ENCODE measurements at regions of chr17 and their contacts with region 1.

Region 1: DNA sequence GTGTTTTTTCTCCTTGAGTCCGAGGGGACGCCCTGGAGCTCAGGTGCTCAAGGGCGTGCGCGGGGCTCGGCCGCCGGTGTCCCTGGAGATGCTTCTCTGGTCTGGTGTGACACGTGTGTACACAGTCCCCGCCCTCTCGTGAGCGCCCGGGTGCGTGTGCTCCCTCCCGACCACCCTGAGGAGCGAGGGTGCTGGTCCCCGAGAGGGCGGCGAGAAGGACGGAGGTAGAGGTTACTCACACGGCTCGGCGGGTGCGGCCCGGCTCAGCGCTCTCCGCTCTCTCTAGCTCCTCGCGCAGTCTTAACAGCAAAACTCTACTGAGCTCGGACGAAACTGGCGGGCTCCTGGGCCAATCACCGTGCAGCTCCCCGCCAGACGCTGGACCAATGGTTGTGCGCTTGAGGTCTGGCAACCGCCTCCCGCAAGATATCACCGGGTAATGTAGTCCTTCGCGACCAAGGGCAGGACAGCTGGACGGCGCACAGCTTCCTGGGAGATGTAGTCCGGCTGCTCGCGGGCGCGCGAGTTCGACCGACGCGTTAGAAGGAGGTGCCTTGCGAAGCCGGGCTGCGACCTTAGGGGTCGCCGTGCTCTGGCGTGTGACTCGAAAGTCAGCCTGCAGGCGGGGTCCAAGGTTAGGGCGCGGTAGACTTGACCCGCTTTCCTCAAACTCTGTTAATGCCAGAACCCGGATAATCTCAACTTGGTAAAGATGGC is at the start of gene SLC25A19:
- DNase-seq: peak; percentile 80 to 98 (median 95)
- ATAC-seq: peak; percentile 96
- H3K4me3 ChIP-seq: peak within 1 kb of the TSS; percentile 84
- H3K4me3 Mint-ChIP-seq: peak within 1 kb of the TSS; percentile 96 to 100 (median 100)
- H3K27ac ChIP-seq: peak within 1 kb of the TSS; percentile 90
- H3K27ac Mint-ChIP-seq: peak within 1 kb of the TSS; percentile 99 to 100 (median 100)
- H3K4me1 ChIP-seq: peaks cover 0 to 6% of the 10 kb centered on the region in 2 donors
- H3K4me1 Mint-ChIP-seq: peaks cover 6 to 28% (median 15%) of the 10 kb centered on the region in 7 donors
- H3K27me3 ChIP-seq: no peaks in the 10 kb centered on the region
- H3K27me3 Mint-ChIP-seq: peaks cover 0 to 2% (median 0%) of the 10 kb centered on the region in 5 donors
- total RNA-seq, gene SLC25A19: 15.6 to 42.5 (median 21.1) TPM

Region 2: GRCh38 chr17:74873038-74873873 is 416.0 kb before region 1 on chr17:
- CTCF ChIA-PET with region 1: no interaction called
- POLR2A ChIA-PET with region 1: no interaction called
- intact Hi-C with region 1: loop called in 1 of 2 experiments (anchors 1 kb)
- DNase-seq: peak; percentile 91 to 100 (median 98)
- ATAC-seq: peak; percentile 97
- H3K4me3 ChIP-seq: peak overlapping the region; percentile 87
- H3K4me3 Mint-ChIP-seq: peak overlapping the region; percentile 74 to 96 (median 88)
- H3K27ac ChIP-seq: peak overlapping the region; percentile 91
- H3K27ac Mint-ChIP-seq: peak overlapping the region; percentile 94 to 99 (median 97)
- H3K4me1 ChIP-seq: peaks cover 11 to 14% of the 10 kb centered on the region in 2 donors
- H3K4me1 Mint-ChIP-seq: peaks cover 18 to 41% (median 22%) of the 10 kb centered on the region in 7 donors
- H3K27me3 ChIP-seq: no peaks in the 10 kb centered on the region
- H3K27me3 Mint-ChIP-seq: peaks cover 0 to 3% (median 0%) of the 10 kb centered on the region in 5 donors

Region 3: GRCh38 chr17:75261336-75262111 is 27.7 kb before region 1 on chr17 and contains the starts of genes GGA3 and MRPS7:
- CTCF ChIA-PET with region 1: interaction called, 6 read pairs
- POLR2A ChIA-PET with region 1: interaction called, 47 read pairs
- intact Hi-C with region 1: loop called (anchors 1 kb)
- DNase-seq: peak; percentile 94 to 98 (median 96)
- ATAC-seq: peak; percentile 97
- H3K4me3 ChIP-seq: peak within 1 kb of the TSS; percentile 98
- H3K4me3 Mint-ChIP-seq: peak within 1 kb of the TSS; percentile 94 to 100 (median 97)
- H3K27ac ChIP-seq: peak within 1 kb of the TSS; percentile 99
- H3K27ac Mint-ChIP-seq: peak within 1 kb of the TSS; percentile 100
- H3K4me1 ChIP-seq: peaks cover 23% of the 10 kb centered on the region in 2 donors
- H3K4me1 Mint-ChIP-seq: peaks cover 40 to 65% (median 62%) of the 10 kb centered on the region in 7 donors
- H3K27me3 ChIP-seq: no peaks in the 10 kb centered on the region
- H3K27me3 Mint-ChIP-seq: no peaks in the 10 kb centered on the region
- total RNA-seq, gene GGA3: 79.6 to 128 (median 87.4) TPM
- total RNA-seq, gene MRPS7: 29.2 to 70.1 (median 34.4) TPM

Region 4: DNA sequence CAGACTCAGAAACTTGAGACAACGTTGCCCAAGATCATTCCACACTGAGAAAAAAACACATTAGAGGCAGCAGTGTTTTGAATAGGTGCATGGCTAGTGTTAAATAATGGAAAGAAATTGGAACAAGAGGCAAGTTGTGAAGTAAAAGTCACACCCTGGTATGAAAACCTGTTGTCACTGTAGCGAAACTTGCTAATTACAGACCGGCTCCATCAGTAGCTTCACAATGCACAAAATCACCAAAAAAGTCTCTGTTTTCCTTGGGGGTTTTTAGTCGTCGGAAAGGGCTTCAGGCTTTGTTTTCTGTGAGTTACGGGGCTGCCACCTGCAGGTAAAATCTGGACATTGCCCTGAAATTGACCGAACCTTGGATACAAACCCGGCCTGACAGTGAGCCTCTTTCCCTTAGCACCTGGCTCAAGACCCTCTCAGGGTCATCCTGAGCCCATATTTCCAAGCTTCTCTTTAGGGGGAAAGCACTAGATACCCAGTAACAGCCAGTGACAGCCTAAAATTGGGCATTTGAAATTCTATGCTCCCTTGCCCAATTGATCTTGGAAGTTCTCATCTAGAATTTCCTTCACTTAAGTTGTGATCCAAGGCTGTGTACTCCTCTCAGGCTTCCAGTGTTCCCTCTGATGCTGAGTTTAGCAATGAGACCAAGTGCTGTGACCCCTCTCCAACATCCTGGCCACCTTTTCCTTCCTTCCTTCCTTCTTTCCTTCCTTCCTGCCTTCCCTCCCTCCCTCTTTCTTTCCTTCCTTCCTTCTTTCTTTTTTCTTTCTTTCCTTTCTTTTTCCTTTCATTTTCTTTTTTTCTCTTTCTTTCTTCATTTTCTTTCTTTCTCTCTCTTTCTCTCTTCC is 123.4 kb after region 1 on chr17:
- CTCF ChIA-PET with region 1: interaction called, 19 read pairs
- POLR2A ChIA-PET with region 1: interaction called, 32 read pairs
- intact Hi-C with region 1: loop called (anchors 1 kb)
- DNase-seq: peak; percentile 52 to 82 (median 73)
- ATAC-seq: peak; percentile 88
- H3K4me3 ChIP-seq: peak overlapping the region; percentile 25
- H3K4me3 Mint-ChIP-seq: peak overlapping the region; percentile 23 to 75 (median 60)
- H3K27ac ChIP-seq: peak overlapping the region; percentile 19
- H3K27ac Mint-ChIP-seq: peak overlapping the region in 6 of 9 donors; percentile 15 to 87 (median 45)
- H3K4me1 ChIP-seq: peaks cover 3 to 13% of the 10 kb centered on the region in 2 donors
- H3K4me1 Mint-ChIP-seq: peaks cover 14 to 26% (median 23%) of the 10 kb centered on the region in 7 donors
- H3K27me3 ChIP-seq: no peaks in the 10 kb centered on the region
- H3K27me3 Mint-ChIP-seq: peaks cover 0 to 27% (median 0%) of the 10 kb centered on the region in 5 donors

Region 5: DNA sequence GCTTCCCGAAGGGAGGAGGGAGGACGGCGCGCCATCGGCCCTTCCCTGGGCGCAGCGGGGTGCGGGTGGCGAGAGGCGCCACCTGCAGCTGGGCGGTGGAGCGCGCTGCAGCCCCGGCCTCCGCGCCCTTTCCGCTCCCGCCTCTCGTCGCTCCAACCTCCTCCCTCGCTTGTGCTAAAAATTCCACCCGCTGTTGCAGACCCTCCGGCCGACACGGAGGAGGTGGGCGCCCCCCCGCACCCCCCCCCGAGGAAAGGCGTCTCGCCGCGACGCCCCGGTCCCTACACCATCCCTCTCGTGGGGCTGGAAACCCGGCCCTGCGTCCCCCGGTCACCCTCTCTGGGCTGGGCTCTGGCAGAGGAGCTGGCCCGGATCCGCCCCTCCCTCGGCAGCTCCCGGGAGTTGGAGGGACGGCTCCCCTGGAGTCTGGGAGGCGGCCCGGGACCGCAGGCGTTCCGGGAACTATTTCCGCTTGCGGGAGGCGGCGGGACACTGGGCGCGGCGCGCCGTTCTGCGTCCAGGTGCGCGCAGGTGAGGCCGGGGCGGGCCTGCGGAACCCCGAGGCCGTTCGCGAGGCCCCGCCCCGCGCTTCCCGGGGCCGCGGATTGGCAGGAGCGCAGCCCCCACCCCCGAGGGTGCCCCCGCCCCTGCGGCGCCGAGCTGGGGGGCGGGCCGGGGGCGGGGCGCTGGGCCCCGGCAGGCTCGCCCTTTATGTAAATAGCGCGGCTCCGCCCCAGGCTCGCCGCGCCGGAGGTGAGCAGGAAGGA is 235.9 kb after region 1 on chr17 and contains the start of gene LLGL2:
- CTCF ChIA-PET with region 1: no interaction called
- POLR2A ChIA-PET with region 1: interaction called, 3 read pairs
- intact Hi-C with region 1: loop called in 1 of 2 experiments (anchors 2 kb)
- DNase-seq: peak; percentile 82 to 91 (median 89)
- ATAC-seq: peak; percentile 98
- H3K4me3 ChIP-seq: peak within 1 kb of the TSS; percentile 75
- H3K4me3 Mint-ChIP-seq: peak within 1 kb of the TSS; percentile 76 to 86 (median 82)
- H3K27ac ChIP-seq: peak within 1 kb of the TSS; percentile 67
- H3K27ac Mint-ChIP-seq: peak within 1 kb of the TSS in 7 of 9 donors; percentile 45 to 74 (median 59)
- H3K4me1 ChIP-seq: peaks cover 6 to 7% of the 10 kb centered on the region in 2 donors
- H3K4me1 Mint-ChIP-seq: peaks cover 0 to 20% (median 16%) of the 10 kb centered on the region in 7 donors
- H3K27me3 ChIP-seq: no peaks in the 10 kb centered on the region
- H3K27me3 Mint-ChIP-seq: peaks cover 0 to 11% (median 0%) of the 10 kb centered on the region in 5 donors
- total RNA-seq, gene LLGL2: 22.4 to 55.7 (median 33.7) TPM

Region 6: GRCh38 chr17:75904749-75905521 is 615.7 kb after region 1 on chr17 and contains the start of gene MRPL38:
- CTCF ChIA-PET with region 1: no interaction called
- POLR2A ChIA-PET with region 1: no interaction called
- intact Hi-C with region 1: loop called in 1 of 2 experiments (anchors 2 kb)
- DNase-seq: peak; percentile 88 to 97 (median 91)
- ATAC-seq: peak; percentile 99
- H3K4me3 ChIP-seq: peak within 1 kb of the TSS; percentile 72
- H3K4me3 Mint-ChIP-seq: peak within 1 kb of the TSS; percentile 83 to 97 (median 92)
- H3K27ac ChIP-seq: peak within 1 kb of the TSS; percentile 85
- H3K27ac Mint-ChIP-seq: peak within 1 kb of the TSS; percentile 90 to 97 (median 95)
- H3K4me1 ChIP-seq: peaks cover 0 to 5% of the 10 kb centered on the region in 2 donors
- H3K4me1 Mint-ChIP-seq: peaks cover 2 to 16% (median 14%) of the 10 kb centered on the region in 7 donors
- H3K27me3 ChIP-seq: no peaks in the 10 kb centered on the region
- H3K27me3 Mint-ChIP-seq: no peaks in the 10 kb centered on the region
- total RNA-seq, gene MRPL38: 81.0 to 154 (median 128) TPM

Measured in naive thymus-derived CD4-positive, alpha-beta T cell (primary cell).